ENCODE measurements at regions of chr11 and their contacts with region 1.

Region 1: GRCh38 chr11:28860893-28861292 is 752.7 kb downstream of the METTL15 start:
- DNase-seq: peak; percentile 85
- H3K4me3 Mint-ChIP-seq: no peak overlapping the region
- H3K27ac Mint-ChIP-seq: peak overlapping the region; percentile 92
- H3K4me1 Mint-ChIP-seq: peaks cover 28% of the 10 kb centered on the region
- H3K27me3 Mint-ChIP-seq: no peaks in the 10 kb centered on the region
- CTCF ChIP-seq: no peak

Region 2: DNA sequence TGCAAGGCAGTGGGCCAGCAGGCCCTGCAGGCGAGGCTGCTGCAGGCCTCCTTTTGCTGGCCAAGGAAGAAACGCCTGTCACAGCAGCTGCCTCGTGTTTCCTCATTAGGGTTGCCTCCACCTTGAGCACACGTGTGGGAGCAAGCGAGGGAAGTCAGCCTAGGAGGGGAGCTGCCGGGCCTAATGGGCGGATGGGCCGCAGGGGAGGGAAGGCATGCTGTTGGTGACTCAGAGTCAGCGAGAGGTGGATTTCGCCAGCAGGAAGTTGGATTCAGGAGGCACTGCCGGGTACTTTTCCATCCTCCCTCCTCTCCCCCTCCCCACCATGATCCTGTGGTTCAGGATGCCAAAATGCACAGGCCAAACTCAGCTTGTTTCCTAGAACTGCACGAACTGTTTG is 254.0 kb before region 1 on chr11:
- CTCF ChIA-PET with region 1: no interaction called
- POLR2A ChIA-PET with region 1: no interaction called
- intact Hi-C with region 1: no loop called
- DNase-seq: peak; percentile 70
- H3K4me3 Mint-ChIP-seq: no peak overlapping the region
- H3K27ac Mint-ChIP-seq: no peak overlapping the region
- H3K4me1 Mint-ChIP-seq: no peaks in the 10 kb centered on the region
- H3K27me3 Mint-ChIP-seq: no peaks in the 10 kb centered on the region
- CTCF ChIP-seq: no peak

Region 3: GRCh38 chr11:28730336-28730735 is 130.6 kb before region 1 on chr11:
- CTCF ChIA-PET with region 1: no interaction called
- POLR2A ChIA-PET with region 1: no interaction called
- intact Hi-C with region 1: no loop called
- DNase-seq: peak; percentile 43
- H3K4me3 Mint-ChIP-seq: no peak overlapping the region
- H3K27ac Mint-ChIP-seq: no peak overlapping the region
- H3K4me1 Mint-ChIP-seq: peaks cover 14% of the 10 kb centered on the region
- H3K27me3 Mint-ChIP-seq: no peaks in the 10 kb centered on the region
- CTCF ChIP-seq: no peak

Region 4: DNA sequence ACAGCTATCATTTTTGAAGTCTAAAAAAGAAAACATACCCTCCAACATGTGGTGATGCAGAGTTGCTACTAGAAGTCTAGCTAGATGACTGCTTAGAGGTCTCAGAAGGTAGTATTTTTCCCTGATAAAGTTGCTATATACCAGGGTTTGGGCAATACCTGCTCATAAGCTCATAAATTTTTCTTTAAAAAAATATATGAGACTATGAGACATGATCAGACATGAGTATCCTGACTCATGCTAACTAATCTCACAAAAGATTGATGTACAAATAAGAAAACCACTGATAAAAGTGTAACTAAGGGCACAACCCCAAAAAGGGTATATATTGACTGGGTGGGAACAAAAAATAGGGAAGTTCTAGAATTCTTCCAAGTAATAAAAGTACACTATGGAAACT is 11.8 kb before region 1 on chr11:
- CTCF ChIA-PET with region 1: no interaction called
- POLR2A ChIA-PET with region 1: interaction called, 14 read pairs
- intact Hi-C with region 1: no loop called
- DNase-seq: no peak
- H3K4me3 Mint-ChIP-seq: no peak overlapping the region
- H3K27ac Mint-ChIP-seq: peak overlapping the region; percentile 57
- H3K4me1 Mint-ChIP-seq: peaks cover 19% of the 10 kb centered on the region
- H3K27me3 Mint-ChIP-seq: no peaks in the 10 kb centered on the region
- CTCF ChIP-seq: no peak

Measured in MCF 10A (cell line).